Gastrocnemius medialis (tissue), 4 donors: ENCODE measurements at regions of chr2 and their contacts with region 1.

Region 1: DNA sequence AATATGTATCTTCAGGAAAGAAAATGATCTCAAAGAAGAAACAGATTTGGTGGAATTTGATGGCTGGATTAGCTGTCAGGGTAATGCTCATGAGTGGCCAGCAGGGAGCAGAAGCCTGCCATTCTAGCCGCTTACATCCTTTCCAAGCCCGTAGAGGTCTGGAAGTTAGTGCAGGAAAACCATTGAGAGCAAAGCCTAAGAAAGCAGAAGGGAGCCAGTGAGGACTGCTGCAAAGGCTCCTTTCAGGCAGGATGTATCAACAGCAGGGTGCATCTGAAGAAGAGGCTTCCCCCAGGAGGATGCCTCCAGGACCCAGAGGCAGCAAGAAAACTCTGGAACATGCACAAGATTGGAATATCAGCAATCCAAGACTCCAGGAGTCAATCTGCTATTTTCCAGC is 22.9 kb upstream of the LBH start:
- DNase-seq: peak; percentile 35 to 53
- ATAC-seq: peak; percentile 89
- H3K4me3 ChIP-seq: no peak overlapping the region
- H3K27ac ChIP-seq: no peak overlapping the region
- H3K4me1 ChIP-seq: no peaks in the 10 kb centered on the region
- H3K27me3 ChIP-seq: no peaks in the 10 kb centered on the region
- CTCF ChIP-seq: peak; percentile 79 to 92 (median 82)
- POLR2A ChIP-seq: no peak

Region 2: DNA sequence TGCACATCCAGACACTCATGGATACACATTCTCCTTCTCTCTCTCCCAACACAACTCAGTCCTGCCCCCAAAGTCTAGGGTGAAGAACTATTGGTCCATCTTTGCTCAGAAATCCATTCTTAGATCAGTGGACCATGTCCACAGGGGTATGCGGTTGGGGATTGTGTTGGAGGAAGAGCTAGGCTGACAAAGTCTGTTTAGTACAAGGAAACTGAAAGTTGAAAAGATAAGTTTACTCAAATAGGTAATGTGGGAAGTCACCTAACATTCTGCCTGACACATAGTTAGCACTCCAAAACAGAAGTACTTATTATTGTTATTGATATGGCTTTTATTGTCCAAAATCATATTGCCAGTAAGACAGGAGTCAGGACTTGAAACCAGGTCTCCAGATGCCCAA is 342.9 kb before region 1 on chr2:
- in situ Hi-C with region 1: no loop called
- intact Hi-C with region 1: no loop called
- DNase-seq: no peak
- ATAC-seq: no peak
- H3K4me3 ChIP-seq: no peak overlapping the region
- H3K27ac ChIP-seq: no peak overlapping the region
- H3K4me1 ChIP-seq: no peaks in the 10 kb centered on the region
- H3K27me3 ChIP-seq: no peaks in the 10 kb centered on the region
- CTCF ChIP-seq: no peak
- POLR2A ChIP-seq: no peak

Region 3: GRCh38 chr2:30165050-30165520 is 43.4 kb before region 1 on chr2:
- in situ Hi-C with region 1: no loop called
- intact Hi-C with region 1: loop called (anchors 5 kb)
- DNase-seq: peak; percentile 20 to 59
- ATAC-seq: peak; percentile 83 to 96
- H3K4me3 ChIP-seq: no peak overlapping the region
- H3K27ac ChIP-seq: no peak overlapping the region
- H3K4me1 ChIP-seq: peaks cover 3 to 9% of the 10 kb centered on the region in 2 donors
- H3K27me3 ChIP-seq: no peaks in the 10 kb centered on the region
- CTCF ChIP-seq: peak; percentile 62 to 88 (median 78)
- POLR2A ChIP-seq: no peak

Region 4: GRCh38 chr2:31170071-31170698 is 961.7 kb after region 1 on chr2:
- in situ Hi-C with region 1: loop called in 1 of 4 experiments (anchors 25 kb)
- intact Hi-C with region 1: no loop called
- DNase-seq: peak; percentile 26 to 46
- ATAC-seq: peak; percentile 82 to 83
- H3K4me3 ChIP-seq: no peak overlapping the region
- H3K27ac ChIP-seq: no peak overlapping the region
- H3K4me1 ChIP-seq: no peaks in the 10 kb centered on the region
- H3K27me3 ChIP-seq: no peaks in the 10 kb centered on the region
- CTCF ChIP-seq: peak; percentile 59 to 85 (median 79)
- POLR2A ChIP-seq: no peak